PC-9 (cell line): ENCODE measurements at regions of chr19 and their contacts with region 1.

Region 1: GRCh38 chr19:47863514-47863936 is 4.5 kb downstream of the TPRX2 start:
- DNase-seq: peak; percentile 56 to 87
- H3K4me3 ChIP-seq: no peak overlapping the region
- H3K27ac ChIP-seq: no peak overlapping the region
- H3K4me1 ChIP-seq: no peaks in the 10 kb centered on the region
- H3K27me3 ChIP-seq: peaks cover 47% of the 10 kb centered on the region
- CTCF ChIP-seq: peak; percentile 99

Region 2: DNA sequence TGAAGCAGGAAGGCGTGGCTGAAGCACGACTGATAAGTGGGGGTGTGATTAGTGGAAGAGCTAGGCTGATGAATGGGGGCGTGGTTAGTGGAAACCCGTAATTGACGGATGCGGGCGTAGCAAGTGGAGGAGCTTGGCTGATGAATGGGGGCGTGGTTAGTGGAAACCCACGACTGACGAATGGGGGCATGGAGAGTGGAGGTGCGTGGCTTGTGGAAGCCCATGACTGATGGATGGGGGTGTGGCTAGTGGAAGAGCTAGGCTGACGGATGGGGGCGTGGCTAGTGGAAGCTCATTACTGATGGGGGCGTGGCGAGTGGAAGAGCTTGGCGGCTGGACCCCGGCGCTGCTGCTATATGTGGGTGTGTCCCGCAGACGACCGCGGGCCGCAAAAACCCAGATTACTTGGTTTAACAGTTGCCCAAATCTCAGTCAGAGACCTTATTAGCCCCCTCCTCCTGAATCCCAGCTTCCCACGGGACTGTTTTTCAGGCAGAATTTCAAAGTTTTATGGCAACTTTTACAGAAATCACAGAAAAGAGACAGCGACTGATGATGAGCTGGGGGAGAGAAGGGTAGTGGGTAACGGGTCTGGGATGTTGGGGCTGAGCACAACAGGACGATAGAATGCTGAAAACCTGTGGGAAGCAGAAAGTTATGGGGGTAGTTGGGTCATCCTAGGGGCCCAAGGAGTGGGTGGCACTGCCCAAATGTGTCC is 435.2 kb before region 1 on chr19:
- CTCF ChIA-PET with region 1: no interaction called
- POLR2A ChIA-PET with region 1: no interaction called
- intact Hi-C with region 1: no loop called
- DNase-seq: peak; percentile 88 to 92
- H3K4me3 ChIP-seq: peak overlapping the region; percentile 33; the same call in 1 of the 2 replicates
- H3K27ac ChIP-seq: 0 out of 2 replicates have a peak overlapping the region, but pooled peaks have one; percentile 19
- H3K4me1 ChIP-seq: peaks cover 22% of the 10 kb centered on the region
- H3K27me3 ChIP-seq: peaks cover 18% of the 10 kb centered on the region
- CTCF ChIP-seq: no peak

Region 3: DNA sequence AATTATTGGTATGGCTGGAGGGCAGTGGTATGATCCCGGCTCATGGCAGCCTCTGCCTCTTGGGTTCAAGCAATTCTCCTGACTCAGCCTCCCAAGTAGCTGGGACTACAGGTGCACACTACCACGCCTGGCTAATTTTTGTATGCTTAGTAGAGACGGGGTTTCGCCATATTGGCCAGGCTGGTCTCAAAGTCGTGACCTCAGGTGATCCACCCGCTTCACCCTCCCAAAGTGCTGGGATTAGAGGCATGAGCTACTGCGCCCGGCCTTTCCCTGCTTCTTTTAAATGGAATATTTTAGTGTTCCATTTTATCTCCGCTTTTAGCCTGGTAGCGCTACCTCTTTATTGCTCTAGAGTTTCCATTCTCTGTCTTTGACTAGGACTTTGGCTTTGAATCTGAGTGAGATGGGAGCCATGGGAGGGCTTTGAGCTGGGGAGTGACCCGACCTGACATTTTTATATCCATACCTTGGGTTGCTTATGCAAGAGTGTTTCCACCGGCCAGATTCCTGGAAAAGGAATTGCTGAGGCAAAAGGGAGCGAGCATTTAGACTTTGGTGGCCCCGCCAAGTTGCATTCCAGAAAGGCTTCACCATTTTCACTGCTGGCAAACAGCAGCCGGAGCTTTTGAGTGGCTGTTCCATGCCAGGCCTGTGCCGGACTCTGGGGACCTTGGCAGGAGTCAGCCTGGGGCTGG is 231.7 kb before region 1 on chr19:
- CTCF ChIA-PET with region 1: no interaction called
- POLR2A ChIA-PET with region 1: interaction called, 20 read pairs
- intact Hi-C with region 1: no loop called
- DNase-seq: no peak
- H3K4me3 ChIP-seq: no peak overlapping the region
- H3K27ac ChIP-seq: no peak overlapping the region
- H3K4me1 ChIP-seq: peaks cover 11% of the 10 kb centered on the region
- H3K27me3 ChIP-seq: no peaks in the 10 kb centered on the region
- CTCF ChIP-seq: no peak

Region 4: DNA sequence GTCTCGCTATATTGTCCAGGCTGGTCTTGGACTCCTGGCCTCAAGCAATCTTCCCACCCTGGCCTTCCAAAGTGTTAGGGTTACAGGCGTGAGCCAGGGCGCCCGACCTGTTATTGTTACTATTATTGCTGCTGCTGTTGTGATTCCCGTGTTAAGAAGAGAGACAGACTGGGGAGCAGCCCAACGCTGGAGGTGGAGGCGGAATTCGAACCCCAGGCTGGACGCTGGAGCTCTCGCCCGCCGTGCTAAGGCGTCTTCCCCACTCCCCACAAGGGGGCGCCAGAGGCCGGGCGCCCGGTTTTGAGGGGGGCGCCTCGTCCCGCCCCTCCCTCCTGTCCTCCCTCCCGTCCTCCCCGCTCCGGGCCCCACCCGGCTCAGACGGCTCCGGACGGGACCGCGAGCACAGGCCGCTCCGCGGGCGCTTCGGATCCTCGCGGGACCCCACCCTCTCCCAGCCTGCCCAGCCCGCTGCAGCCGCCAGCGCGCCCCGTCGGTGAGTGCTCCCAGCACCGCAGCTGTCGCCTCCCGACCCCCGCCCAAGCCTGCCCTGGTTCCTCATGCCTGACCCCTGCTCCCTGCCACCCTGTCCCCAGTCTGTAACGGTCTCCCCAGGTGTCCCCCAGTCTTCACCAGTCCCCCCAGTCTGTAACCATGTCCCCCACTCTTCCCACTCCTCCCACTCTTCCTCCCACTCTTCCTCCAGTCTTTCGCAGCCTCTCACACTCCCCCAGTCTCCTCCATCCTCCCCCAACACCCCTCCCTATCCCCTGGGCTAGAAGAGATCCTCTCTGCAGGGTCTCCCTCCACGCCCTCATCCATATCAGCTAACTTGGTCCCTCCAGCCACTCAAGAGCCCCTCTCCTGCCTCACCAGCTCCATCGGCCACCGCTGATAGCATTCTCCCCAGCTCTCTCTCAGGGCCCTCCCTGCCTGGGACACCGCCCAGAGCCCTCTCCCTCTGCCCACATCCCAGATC is 150.2 kb before region 1 on chr19 and contains the start of gene EHD2:
- CTCF ChIA-PET with region 1: interaction called, 7 read pairs
- POLR2A ChIA-PET with region 1: no interaction called
- intact Hi-C with region 1: loop called (anchors 1 kb)
- DNase-seq: peak in 1 of 2 experiments; percentile 73
- H3K4me3 ChIP-seq: no peak within 1 kb of the TSS
- H3K27ac ChIP-seq: no peak within 1 kb of the TSS
- H3K4me1 ChIP-seq: 0 out of 2 replicates have a peak, but pooled peaks cover 5% of the 10 kb centered on the region
- H3K27me3 ChIP-seq: no peaks in the 10 kb centered on the region
- CTCF ChIP-seq: peak; percentile 94
- total RNA-seq, gene EHD2: 25.6 and 36.6 TPM in 2 replicates

Region 5: DNA sequence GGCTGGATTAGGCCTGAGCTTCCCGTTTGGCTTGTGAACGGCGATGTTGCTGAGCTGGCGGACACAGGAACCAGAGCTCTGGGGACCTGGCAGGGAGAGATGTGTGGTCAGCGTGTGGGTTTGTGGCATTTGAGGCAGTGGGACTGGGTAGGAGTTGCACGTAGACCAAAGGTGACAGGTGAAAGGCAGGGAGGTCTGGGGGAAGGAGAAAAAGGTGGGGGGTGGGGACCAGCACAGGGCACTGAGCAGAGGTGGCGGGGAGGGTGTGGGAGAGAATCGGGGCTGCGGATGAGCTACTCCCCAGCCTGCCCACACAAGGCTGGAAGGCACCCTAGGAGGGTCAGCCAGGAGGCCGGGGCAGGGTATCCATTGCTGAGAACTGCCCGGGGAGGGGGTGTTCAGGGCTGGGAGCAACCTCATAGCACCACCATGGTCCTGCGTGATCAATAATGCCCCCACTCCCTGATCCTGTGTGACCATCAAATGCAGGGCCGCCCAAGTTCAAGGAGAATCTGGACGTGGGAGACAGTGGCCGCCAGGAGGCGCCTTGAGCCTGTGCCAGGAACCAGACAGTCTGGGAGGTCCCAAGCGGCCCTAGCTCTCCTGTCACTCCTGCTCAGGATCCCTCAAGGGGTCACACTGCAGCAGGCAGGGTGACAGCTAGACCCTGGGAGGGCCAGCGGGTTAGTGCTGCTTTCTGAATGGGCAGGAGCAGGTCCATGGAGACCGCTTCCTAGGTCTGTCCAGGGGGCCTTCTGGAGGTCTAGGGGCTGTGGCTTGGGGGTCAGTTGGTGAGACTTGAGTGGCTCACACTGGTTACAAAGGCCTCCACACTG is 97.8 kb before region 1 on chr19:
- CTCF ChIA-PET with region 1: interaction called, 3 read pairs
- POLR2A ChIA-PET with region 1: no interaction called
- intact Hi-C with region 1: loop called (anchors 1 kb)
- DNase-seq: peak in 1 of 2 experiments; percentile 51
- H3K4me3 ChIP-seq: no peak overlapping the region
- H3K27ac ChIP-seq: no peak overlapping the region
- H3K4me1 ChIP-seq: no peaks in the 10 kb centered on the region
- H3K27me3 ChIP-seq: no peaks in the 10 kb centered on the region
- CTCF ChIP-seq: peak; percentile 91

Region 6: GRCh38 chr19:48044561-48044960 is 181.0 kb after region 1 on chr19:
- CTCF ChIA-PET with region 1: no interaction called
- POLR2A ChIA-PET with region 1: no interaction called
- intact Hi-C with region 1: no loop called
- DNase-seq: no peak
- H3K4me3 ChIP-seq: no peak overlapping the region
- H3K27ac ChIP-seq: no peak overlapping the region
- H3K4me1 ChIP-seq: no peaks in the 10 kb centered on the region
- H3K27me3 ChIP-seq: peaks cover 82% of the 10 kb centered on the region
- CTCF ChIP-seq: no peak